AG04450 (cell line): ENCODE measurements at regions of chr13 and their contacts with region 1.

Region 1: GRCh38 chr13:99269627-99270241 is 11.6 kb upstream of the GPR18 start:
- DNase-seq: peak; percentile 36
- H3K4me3 ChIP-seq: no peak overlapping the region
- H3K27ac ChIP-seq: no peak overlapping the region
- H3K27me3 ChIP-seq: no peaks in the 10 kb centered on the region
- CTCF ChIP-seq: peak; percentile 84

Region 2: GRCh38 chr13:98706446-98707110 is 563.2 kb before region 1 on chr13:
- CTCF ChIA-PET with region 1: no interaction called
- POLR2A ChIA-PET with region 1: no interaction called
- DNase-seq: no peak
- H3K4me3 ChIP-seq: no peak overlapping the region
- H3K27ac ChIP-seq: no peak overlapping the region
- H3K27me3 ChIP-seq: peaks cover 13% of the 10 kb centered on the region
- CTCF ChIP-seq: no peak

Region 3: GRCh38 chr13:99176309-99177276 is 93.1 kb before region 1 on chr13:
- CTCF ChIA-PET with region 1: interaction called, 241 read pairs
- POLR2A ChIA-PET with region 1: interaction called, 3 read pairs
- DNase-seq: no peak
- H3K4me3 ChIP-seq: no peak overlapping the region
- H3K27ac ChIP-seq: no peak overlapping the region
- H3K27me3 ChIP-seq: peaks cover 15% of the 10 kb centered on the region
- CTCF ChIP-seq: peak; percentile 99

Region 4: DNA sequence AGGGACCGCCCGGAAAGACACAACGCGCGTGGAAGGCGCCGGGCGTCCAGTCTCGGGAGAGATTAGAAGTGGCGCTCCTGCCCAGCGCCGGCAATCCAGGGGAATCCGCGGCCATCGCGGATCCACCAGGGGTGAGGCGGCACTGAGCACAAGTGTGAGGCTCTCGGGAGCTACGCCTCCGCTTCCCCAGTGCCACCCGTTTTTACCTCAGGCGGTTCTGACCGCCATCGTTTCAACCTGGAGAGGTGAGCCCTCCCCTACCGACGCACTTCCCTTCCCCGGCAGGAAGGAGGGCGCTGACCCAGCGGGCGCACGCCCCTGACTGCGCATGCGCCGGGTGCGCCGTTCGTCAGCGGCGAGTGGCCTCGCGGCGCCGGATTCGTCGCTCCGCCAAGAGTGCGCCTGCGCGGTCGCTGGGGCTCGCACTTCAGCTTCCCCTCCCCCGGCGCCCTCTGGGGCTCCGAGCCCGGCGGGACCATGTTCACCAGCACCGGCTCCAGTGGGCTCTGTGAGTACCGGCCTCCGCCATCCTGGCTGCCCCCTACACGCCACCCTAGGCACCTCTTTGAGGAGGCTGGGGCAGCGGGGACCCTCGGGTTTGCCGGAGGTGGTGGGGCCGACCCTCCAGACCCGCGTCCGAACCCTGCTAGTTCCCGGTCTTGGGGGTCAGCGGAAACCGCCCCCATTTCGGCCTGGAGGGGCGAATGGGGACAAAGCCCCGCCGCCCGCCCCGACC is 69.1 kb before region 1 on chr13 and contains the start of gene UBAC2:
- CTCF ChIA-PET with region 1: interaction called, 21 read pairs
- POLR2A ChIA-PET with region 1: interaction called, 6 read pairs
- DNase-seq: peak; percentile 86
- H3K4me3 ChIP-seq: peak within 1 kb of the TSS; percentile 94
- H3K27ac ChIP-seq: peak within 1 kb of the TSS; percentile 96
- H3K27me3 ChIP-seq: no peaks in the 10 kb centered on the region
- CTCF ChIP-seq: peak; percentile 12; the same call in 1 of the 2 replicates
- polyA plus RNA-seq, gene UBAC2: 57.9 and 71.4 TPM in 2 replicates

Region 5: GRCh38 chr13:99258210-99258860 is 11.4 kb before region 1 on chr13 and contains the start of gene GPR18:
- CTCF ChIA-PET with region 1: interaction called, 37 read pairs
- POLR2A ChIA-PET with region 1: no interaction called
- DNase-seq: no peak
- H3K4me3 ChIP-seq: no peak within 1 kb of the TSS
- H3K27ac ChIP-seq: no peak within 1 kb of the TSS
- H3K27me3 ChIP-seq: no peaks in the 10 kb centered on the region
- CTCF ChIP-seq: no peak
- polyA plus RNA-seq, gene GPR18: not detected in 2 replicates

Region 6: DNA sequence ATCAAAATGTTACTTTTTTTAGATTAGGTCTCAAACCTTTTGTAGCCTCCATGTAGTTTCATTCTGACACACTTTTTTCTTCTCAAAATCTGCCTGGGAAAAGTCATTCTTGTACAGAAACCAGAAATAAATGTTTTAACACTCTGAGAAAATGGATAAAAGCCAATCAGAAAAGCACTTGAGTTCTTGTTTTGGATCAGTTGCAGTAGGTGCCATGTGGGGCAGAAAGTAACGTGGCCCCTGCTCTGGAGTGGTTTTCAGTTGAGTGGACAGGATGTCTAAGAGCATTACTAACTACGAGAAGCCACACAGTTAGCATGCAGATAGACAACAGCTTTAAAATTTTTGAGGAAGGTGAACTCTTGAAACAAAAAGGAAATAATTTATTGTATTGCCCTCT is 18.4 kb after region 1 on chr13:
- CTCF ChIA-PET with region 1: interaction called, 39 read pairs
- POLR2A ChIA-PET with region 1: no interaction called
- DNase-seq: no peak
- H3K4me3 ChIP-seq: no peak overlapping the region
- H3K27ac ChIP-seq: no peak overlapping the region
- H3K27me3 ChIP-seq: no peaks in the 10 kb centered on the region
- CTCF ChIP-seq: no peak

Region 7: GRCh38 chr13:99448546-99448945 is 178.8 kb after region 1 on chr13:
- CTCF ChIA-PET with region 1: interaction called, 767 read pairs
- POLR2A ChIA-PET with region 1: no interaction called
- DNase-seq: no peak
- H3K4me3 ChIP-seq: no peak overlapping the region
- H3K27ac ChIP-seq: no peak overlapping the region
- H3K27me3 ChIP-seq: peaks cover 8% of the 10 kb centered on the region
- CTCF ChIP-seq: no peak